Adrenal gland (tissue), 19 donors: ENCODE measurements at regions of chr10 and their contacts with region 1.

Region 1: DNA sequence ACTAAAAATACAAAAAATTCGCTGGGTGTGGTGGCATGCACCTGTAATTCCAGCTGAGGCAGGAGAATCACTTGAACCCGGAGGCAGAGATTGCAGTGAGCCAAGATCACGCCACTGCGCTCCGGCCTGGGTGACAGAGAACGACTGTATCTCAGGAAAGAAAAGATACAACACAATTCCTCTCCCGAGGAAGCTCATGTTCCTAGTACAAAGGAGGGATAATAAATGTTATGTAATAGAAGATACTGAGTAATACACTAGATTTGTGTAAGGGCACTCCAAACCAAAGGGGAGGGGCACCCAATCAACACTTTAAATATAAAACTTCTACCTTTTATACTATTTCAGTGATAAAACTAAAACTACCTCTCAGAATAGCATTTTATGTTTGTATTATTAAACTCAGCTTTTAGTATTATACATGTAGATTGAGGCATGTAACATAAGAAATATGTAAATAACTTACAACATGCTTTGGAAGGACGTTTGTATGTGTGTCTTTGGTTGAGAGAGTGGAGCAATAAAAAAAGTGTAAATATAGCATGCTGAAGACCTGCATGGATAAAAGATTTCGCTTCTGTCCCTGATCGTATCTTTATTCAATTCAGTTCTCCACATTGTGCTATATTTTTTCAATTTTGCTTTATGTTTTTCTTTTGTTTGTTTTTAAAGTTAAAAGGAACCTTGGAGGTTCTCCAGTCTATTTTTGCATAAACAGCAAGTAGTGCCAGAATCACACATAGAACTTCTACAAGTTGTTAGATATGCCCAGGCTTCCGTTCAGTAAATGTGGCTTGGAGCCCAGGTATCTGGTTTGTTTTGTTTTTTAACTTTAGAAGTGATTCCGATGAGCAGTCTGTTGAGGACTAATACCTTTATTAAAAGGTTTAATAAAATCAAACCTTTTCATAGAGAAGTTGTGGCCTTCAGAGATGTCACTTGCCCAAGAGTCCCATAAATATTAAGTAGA is 71.9 kb downstream of the WAC start:
- DNase-seq: no peak
- H3K4me3 ChIP-seq: no peak overlapping the region
- H3K27ac ChIP-seq: no peak overlapping the region
- H3K4me1 ChIP-seq: peaks cover 7 to 27% of the 10 kb centered on the region in 2 donors
- H3K27me3 ChIP-seq: no peaks in the 10 kb centered on the region
- CTCF ChIP-seq: no peak
- POLR2A ChIP-seq: no peak

Region 2: DNA sequence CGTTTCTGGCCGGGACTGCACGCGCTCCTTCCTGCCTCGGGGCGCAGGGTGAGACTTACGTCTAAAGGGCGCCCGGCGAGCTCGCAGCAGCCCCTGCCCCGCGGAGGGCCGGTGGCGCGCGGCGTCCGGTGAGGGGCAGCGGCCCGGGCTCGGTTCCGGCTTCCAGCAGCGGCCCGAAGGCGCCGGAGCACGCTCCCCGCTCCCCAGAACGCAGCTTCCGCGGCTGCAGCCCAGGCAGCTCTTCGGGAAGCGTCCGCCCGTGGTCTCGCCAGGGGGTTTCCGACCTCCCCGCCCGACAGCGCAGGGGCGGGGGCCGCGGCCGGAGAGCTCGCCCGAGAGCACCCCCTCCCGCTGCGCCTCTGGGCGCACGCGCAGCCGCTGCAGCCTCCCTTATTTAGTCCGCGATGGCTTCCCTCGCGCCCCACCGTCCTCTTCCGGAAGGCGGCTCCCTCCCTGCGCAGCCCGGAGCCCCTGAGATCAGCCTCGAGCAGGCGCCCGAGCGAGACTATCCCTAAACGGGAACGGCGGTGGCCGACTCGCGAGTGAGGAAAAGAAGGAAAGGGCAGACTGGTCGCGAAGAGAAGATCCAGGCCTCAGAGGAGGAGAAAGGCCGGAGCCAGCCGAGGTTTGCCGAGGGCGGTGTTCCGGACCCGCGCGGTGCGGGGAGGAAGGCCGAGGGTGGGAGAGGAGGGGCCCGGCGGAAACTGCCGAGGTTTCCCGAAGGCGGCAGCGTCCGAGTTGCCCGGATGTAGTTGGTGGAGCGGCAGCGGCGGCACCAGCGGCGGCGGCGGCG is 72.3 kb before region 1 on chr10 and contains the start of gene WAC:
- intact Hi-C with region 1: loop called in 1 of 2 experiments (anchors 10 kb)
- DNase-seq: peak; percentile 94 to 97 (median 96)
- H3K4me3 ChIP-seq: peak within 1 kb of the TSS; percentile 46 to 100 (median 91)
- H3K27ac ChIP-seq: peak within 1 kb of the TSS; percentile 90 to 99 (median 98)
- H3K4me1 ChIP-seq: peaks cover 5 to 44% of the 10 kb centered on the region in 2 donors
- H3K27me3 ChIP-seq: no peaks in the 10 kb centered on the region
- CTCF ChIP-seq: peak in 3 of 6 experiments; percentile 22 to 40 (median 34)
- POLR2A ChIP-seq: peak; percentile 67 to 81
- total RNA-seq, gene WAC: 82.6 to 131 (median 111) TPM

Region 3: DNA sequence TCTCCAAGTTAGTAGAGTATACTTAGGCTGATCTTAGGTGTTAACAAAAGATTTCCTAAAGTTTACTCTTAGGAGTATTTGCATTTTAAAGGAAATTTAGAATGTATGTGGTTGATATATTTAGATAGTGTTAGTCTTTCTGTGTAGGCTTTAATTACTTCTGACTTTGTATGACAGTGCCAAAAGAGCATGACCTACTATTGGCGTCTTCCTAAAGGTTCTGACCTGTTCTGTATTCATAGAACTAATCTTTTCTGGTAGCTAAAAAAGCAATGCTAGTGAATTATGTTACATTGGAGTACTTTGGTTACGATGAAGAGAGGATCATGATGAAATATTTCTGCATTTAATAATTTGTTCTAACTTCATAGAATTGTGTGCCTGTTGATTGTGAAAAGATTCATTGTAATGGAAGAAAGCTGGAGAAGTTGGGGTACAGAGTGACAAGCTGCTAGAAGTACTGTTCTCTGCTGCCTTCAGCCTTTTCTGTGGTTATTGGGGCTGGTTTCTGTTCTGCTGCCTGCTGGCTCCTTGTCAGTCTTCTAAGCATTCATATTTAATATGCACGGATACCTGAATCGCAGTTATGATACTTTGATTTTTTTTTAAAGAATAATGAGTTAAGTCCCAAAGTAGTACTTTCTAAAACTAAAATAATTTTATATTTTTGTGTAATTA is 58.7 kb before region 1 on chr10:
- intact Hi-C with region 1: loop called in 1 of 2 experiments (anchors 10 kb)
- DNase-seq: no peak
- H3K4me3 ChIP-seq: no peak overlapping the region
- H3K27ac ChIP-seq: no peak overlapping the region
- H3K4me1 ChIP-seq: peaks cover 0 to 61% of the 10 kb centered on the region in 2 donors
- H3K27me3 ChIP-seq: no peaks in the 10 kb centered on the region
- CTCF ChIP-seq: no peak
- POLR2A ChIP-seq: no peak